ENCODE measurements at regions of chr16 and their contacts with region 1.

Region 1: DNA sequence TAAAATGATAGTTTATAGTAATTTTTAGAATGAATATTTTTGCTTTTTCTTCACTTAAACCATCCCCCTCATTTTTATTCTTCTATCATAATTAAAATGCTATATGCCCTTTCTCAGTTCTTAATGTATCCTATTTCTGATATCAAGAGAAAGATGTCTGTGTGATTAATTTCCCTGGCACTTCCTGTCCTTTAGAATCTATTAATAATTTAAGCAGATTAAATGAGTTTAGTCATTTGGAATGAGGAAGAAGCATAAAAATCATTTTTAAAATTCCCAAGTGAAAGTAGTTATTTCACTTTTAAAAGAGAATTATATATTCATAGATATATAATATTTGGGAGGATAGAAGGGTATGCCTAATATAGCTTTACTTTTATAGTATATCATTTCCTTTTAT is 27.8 kb upstream of the CDR2 start:
- DNase-seq: peak; percentile 58
- H3K4me3 ChIP-seq: peak overlapping the region in 2 of 3 experiments; percentile 35 to 39
- H3K27ac ChIP-seq: peak overlapping the region; percentile 92
- H3K4me1 ChIP-seq: peaks cover 24% of the 10 kb centered on the region
- H3K27me3 ChIP-seq: no peaks in the 10 kb centered on the region
- CTCF ChIP-seq: no peak
- POLR2A ChIP-seq: no peak

Region 2: DNA sequence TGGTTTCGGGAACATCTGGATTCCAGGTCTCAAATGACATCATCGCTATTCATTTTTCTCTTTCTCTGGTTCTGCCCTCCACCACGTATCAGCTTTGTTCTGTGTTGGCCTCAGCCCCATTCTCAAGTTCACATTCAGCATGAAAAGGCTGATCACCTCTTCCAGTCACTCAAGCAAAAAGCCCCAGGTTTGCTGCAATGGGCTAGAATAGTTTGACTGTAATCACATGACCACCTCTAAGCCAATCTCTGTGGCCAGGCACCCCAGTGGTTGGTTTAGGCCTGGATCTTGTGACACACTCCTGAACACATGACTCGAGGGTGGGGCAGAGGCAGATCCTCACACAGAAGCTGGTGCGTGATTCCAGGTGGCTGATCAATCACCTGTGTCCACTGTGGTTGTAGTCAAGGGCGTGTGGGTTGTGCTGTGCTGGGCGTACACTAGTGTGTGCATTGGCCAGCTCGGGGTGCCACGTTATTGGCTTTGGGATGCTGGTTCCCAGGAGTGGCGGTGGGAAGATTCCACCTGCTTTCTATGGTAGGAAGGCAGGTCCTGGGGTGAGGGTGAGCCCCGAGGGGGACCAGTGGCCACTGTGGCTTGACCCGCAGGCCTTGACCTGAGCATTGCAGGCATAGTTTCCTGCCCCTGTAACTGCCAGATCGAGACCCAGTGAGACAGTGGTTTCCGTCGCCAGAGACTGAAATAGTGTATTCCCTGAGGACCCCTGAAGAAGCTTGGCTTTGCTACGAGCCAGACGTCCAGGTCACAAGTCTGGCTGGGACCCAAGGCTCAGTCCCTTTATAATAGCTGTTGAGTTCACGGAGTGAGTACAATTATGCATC is 184.1 kb before region 1 on chr16:
- CTCF ChIA-PET with region 1: no interaction called
- POLR2A ChIA-PET with region 1: no interaction called
- dilution Hi-C with region 1: no loop called
- intact Hi-C with region 1: no loop called
- DNase-seq: no peak
- H3K4me3 ChIP-seq: no peak overlapping the region
- H3K27ac ChIP-seq: no peak overlapping the region
- H3K4me1 ChIP-seq: no peaks in the 10 kb centered on the region
- H3K27me3 ChIP-seq: no peaks in the 10 kb centered on the region
- CTCF ChIP-seq: no peak
- POLR2A ChIP-seq: no peak

Region 3: DNA sequence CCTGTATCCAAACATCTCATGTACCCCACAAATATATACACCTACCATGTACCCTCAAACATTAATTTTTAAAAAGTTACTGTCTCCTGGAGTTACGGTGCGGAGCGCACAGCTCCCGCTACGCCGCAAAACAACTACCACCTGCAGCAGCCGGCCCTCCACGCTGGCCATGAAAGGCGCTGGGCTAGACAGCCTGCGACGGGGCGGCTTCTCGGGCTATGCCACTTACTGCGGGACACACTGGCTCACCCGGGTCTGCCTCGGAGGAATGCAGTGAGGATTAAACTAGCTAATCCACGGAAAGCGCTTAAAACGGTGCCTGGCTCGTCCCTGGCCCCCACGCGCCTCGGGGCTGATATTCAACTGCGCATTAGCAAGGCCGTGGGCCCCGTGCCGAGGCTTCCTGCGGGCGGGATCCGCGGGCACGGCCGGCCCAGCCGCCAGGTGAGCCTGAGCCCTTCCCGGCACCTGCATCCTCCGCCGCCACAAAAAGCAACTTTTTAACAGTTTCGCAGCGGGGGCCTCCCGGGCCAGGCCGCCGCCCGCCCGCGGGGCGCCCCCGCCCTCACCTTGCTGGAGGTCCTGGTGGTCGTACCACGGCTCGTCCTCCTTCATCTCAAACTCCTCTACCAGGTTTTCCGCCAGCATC is 28.4 kb before region 1 on chr16:
- CTCF ChIA-PET with region 1: interaction called, 5 read pairs
- POLR2A ChIA-PET with region 1: interaction called, 7 read pairs
- dilution Hi-C with region 1: no loop called
- intact Hi-C with region 1: loop called (anchors 2 kb)
- DNase-seq: peak; percentile 56
- H3K4me3 ChIP-seq: peak overlapping the region; percentile 82 to 97 (median 87)
- H3K27ac ChIP-seq: peak overlapping the region; percentile 71
- H3K4me1 ChIP-seq: peaks cover 46% of the 10 kb centered on the region
- H3K27me3 ChIP-seq: no peaks in the 10 kb centered on the region
- CTCF ChIP-seq: no peak
- POLR2A ChIP-seq: no peak

Measured in endothelial cell of umbilical vein (primary cell).